GM12878 (cell line): ENCODE measurements at regions of chr19 and their contacts with region 1.

Region 1: GRCh38 chr19:5967994-5968430 is 9.9 kb downstream of the RANBP3 start:
- DNase-seq: peak; percentile 17
- ATAC-seq: peak; percentile 91
- H3K4me3 ChIP-seq: no peak overlapping the region
- H3K27ac ChIP-seq: peak overlapping the region; percentile 53
- H3K4me1 ChIP-seq: peaks cover 12% of the 10 kb centered on the region
- H3K27me3 ChIP-seq: no peaks in the 10 kb centered on the region
- CTCF ChIP-seq: peak; percentile 80 to 92 (median 82)
- EP300 ChIP-seq: 0 out of 4 replicates have a peak, but pooled peaks of 1 of the 2 experiments have one; percentile 21
- POLR2A ChIP-seq: no peak
- RAD21 ChIP-seq: peak; percentile 73

Region 2: GRCh38 chr19:5798244-5798643 is 169.8 kb before region 1 on chr19:
- CTCF ChIA-PET with region 1: no interaction called
- POLR2A ChIA-PET with region 1: no interaction called
- RAD21 ChIA-PET with region 1: no interaction called
- SMC1A ChIA-PET with region 1: no interaction called
- in situ Hi-C with region 1: no loop called
- intact Hi-C with region 1: no loop called
- DNase-seq: no peak
- ATAC-seq: no peak
- H3K4me3 ChIP-seq: no peak overlapping the region
- H3K27ac ChIP-seq: no peak overlapping the region
- H3K4me1 ChIP-seq: peaks cover 1% of the 10 kb centered on the region
- H3K27me3 ChIP-seq: no peaks in the 10 kb centered on the region; a peak in 1 of 4 replicates
- CTCF ChIP-seq: no peak
- EP300 ChIP-seq: no peak
- POLR2A ChIP-seq: no peak
- RAD21 ChIP-seq: no peak

Region 3: GRCh38 chr19:5857203-5858081 is 110.6 kb before region 1 on chr19:
- CTCF ChIA-PET with region 1: no interaction called
- POLR2A ChIA-PET with region 1: no interaction called
- RAD21 ChIA-PET with region 1: no interaction called
- SMC1A ChIA-PET with region 1: no interaction called
- in situ Hi-C with region 1: no loop called
- intact Hi-C with region 1: no loop called
- DNase-seq: no peak
- ATAC-seq: no peak
- H3K4me3 ChIP-seq: no peak overlapping the region
- H3K27ac ChIP-seq: no peak overlapping the region
- H3K4me1 ChIP-seq: no peaks in the 10 kb centered on the region
- H3K27me3 ChIP-seq: no peaks in the 10 kb centered on the region; a peak in 1 of 4 replicates
- CTCF ChIP-seq: no peak
- EP300 ChIP-seq: no peak
- POLR2A ChIP-seq: no peak
- RAD21 ChIP-seq: no peak

Region 4: DNA sequence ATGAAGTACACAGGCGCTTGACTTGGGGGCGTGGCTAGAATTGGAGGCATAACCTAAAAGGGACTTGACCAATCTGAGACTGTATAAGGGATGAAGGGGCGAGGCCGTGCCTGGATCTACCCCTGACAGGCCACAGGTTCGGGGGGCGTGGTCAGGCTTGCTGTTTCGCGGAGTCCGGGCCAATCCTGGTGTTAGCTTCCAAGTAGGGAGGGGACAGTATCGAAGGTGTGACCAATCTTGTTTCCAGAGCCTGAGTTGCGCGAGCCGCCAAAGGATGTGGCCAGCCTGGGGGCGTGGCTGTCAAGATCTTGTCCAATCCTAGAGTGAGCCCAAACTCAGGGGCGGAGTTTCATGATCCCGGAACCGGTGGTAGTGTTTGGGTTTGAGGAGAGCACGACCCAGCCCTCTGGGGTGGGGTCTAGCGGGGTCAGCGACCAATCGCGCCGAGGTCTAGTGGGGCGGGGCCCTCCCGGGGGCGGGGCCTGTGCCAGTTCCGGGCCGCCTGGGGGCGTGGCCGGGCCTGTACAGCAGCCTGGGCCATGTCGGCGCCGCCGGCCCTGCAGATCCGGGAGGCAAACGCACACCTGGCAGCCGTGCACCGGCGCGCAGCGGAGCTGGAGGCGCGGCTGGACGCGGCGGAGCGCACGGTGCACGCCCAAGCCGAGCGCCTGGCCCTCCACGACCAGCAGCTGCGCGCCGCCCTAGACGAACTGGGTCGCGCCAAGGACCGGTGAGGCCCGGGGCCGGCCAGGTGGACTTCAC is 63.5 kb before region 1 on chr19 and contains the start of gene VMAC:
- CTCF ChIA-PET with region 1: interaction called, 15 read pairs
- POLR2A ChIA-PET with region 1: interaction called, 6 read pairs
- RAD21 ChIA-PET with region 1: interaction called, 4 read pairs
- SMC1A ChIA-PET with region 1: interaction called, 3 read pairs
- in situ Hi-C with region 1: no loop called
- intact Hi-C with region 1: no loop called
- DNase-seq: peak; percentile 100
- ATAC-seq: peak; percentile 90
- H3K4me3 ChIP-seq: peak within 1 kb of the TSS; percentile 95
- H3K27ac ChIP-seq: peak within 1 kb of the TSS; percentile 88
- H3K4me1 ChIP-seq: peaks cover 9% of the 10 kb centered on the region
- H3K27me3 ChIP-seq: no peaks in the 10 kb centered on the region
- CTCF ChIP-seq: no peak
- EP300 ChIP-seq: no peak
- POLR2A ChIP-seq: peak; percentile 92
- RAD21 ChIP-seq: no peak
- polyA plus RNA-seq, gene VMAC: 0.18 to 0.27 TPM

Region 5: GRCh38 chr19:5926641-5927440 is 41.2 kb before region 1 on chr19:
- CTCF ChIA-PET with region 1: no interaction called
- POLR2A ChIA-PET with region 1: no interaction called
- RAD21 ChIA-PET with region 1: no interaction called
- SMC1A ChIA-PET with region 1: no interaction called
- in situ Hi-C with region 1: no loop called
- intact Hi-C with region 1: no loop called
- DNase-seq: no peak
- ATAC-seq: no peak
- H3K4me3 ChIP-seq: no peak overlapping the region
- H3K27ac ChIP-seq: no peak overlapping the region
- H3K4me1 ChIP-seq: peaks cover 15% of the 10 kb centered on the region
- H3K27me3 ChIP-seq: no peaks in the 10 kb centered on the region
- CTCF ChIP-seq: no peak
- EP300 ChIP-seq: no peak
- POLR2A ChIP-seq: no peak
- RAD21 ChIP-seq: no peak

Region 6: DNA sequence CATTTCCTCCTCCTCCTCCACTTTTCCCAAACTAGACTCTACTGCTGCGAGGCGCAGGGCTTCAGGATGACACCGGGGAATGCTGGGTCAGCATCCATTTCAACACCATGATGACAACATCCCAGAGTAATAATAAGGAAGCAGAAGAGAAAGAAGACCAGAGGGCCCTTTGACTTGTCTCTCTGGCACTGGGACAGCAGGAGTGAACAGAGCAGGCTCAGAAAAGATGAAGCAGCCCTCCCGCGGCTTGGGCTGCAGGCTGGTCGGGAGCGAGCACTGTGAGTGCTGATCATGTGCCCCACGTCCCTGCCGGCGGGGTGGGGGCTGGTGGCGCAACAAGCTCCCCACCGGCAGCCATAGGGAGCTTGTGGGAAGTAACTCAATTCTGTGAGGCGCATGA is 20.6 kb before region 1 on chr19:
- CTCF ChIA-PET with region 1: interaction called, 16 read pairs
- POLR2A ChIA-PET with region 1: interaction called, 4 read pairs
- RAD21 ChIA-PET with region 1: no interaction called
- SMC1A ChIA-PET with region 1: interaction called, 4 read pairs
- in situ Hi-C with region 1: no loop called
- intact Hi-C with region 1: no loop called
- DNase-seq: no peak
- ATAC-seq: no peak
- H3K4me3 ChIP-seq: no peak overlapping the region
- H3K27ac ChIP-seq: no peak overlapping the region
- H3K4me1 ChIP-seq: peaks cover 10% of the 10 kb centered on the region
- H3K27me3 ChIP-seq: no peaks in the 10 kb centered on the region
- CTCF ChIP-seq: no peak
- EP300 ChIP-seq: no peak
- POLR2A ChIP-seq: no peak
- RAD21 ChIP-seq: no peak

Region 7: GRCh38 chr19:5953680-5954213 is 14.3 kb before region 1 on chr19:
- CTCF ChIA-PET with region 1: interaction called, 22 read pairs
- POLR2A ChIA-PET with region 1: interaction called, 4 read pairs
- RAD21 ChIA-PET with region 1: interaction called, 3 read pairs
- SMC1A ChIA-PET with region 1: interaction called, 3 read pairs
- in situ Hi-C with region 1: no loop called
- intact Hi-C with region 1: no loop called
- DNase-seq: no peak
- ATAC-seq: no peak
- H3K4me3 ChIP-seq: no peak overlapping the region
- H3K27ac ChIP-seq: no peak overlapping the region
- H3K4me1 ChIP-seq: peaks cover 22% of the 10 kb centered on the region
- H3K27me3 ChIP-seq: no peaks in the 10 kb centered on the region
- CTCF ChIP-seq: no peak
- EP300 ChIP-seq: no peak
- POLR2A ChIP-seq: no peak
- RAD21 ChIP-seq: no peak

Region 8: DNA sequence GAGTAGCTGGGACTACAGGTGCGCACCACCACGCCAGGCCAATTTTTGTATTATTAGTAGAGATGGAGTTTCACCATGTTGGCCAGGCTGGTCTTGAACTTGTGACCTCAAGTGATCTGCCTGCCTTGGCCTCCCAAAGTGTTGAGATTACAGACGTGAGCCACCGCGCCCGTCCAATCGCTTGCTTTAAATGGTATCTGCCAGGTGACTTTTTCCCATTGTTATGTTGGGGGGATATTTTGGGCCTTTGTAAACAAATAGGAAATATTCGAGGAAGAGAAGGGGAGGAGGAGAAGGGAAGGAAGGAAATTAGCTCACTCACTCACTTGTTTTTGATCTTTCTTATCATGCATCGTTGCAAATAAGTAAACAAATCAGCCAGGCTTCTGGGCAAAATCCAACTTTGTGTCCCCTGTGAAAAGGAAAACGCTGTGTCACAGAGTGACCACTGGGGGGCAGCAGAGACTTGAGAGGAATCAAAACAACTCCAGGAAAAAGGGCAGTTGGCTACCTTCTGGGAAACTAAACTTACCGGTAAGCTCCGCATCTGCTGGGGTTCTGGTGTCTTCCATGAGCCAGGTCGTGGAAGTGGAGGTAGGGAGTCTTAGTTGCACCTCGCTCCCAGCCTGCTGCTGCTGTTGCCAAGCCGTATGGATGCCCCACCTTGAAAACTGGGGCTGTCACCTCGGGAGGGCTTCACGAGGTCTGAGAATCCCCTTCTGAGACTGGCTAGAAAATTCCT is 19.2 kb after region 1 on chr19:
- CTCF ChIA-PET with region 1: interaction called, 76 read pairs
- POLR2A ChIA-PET with region 1: interaction called, 4 read pairs
- RAD21 ChIA-PET with region 1: interaction called, 17 read pairs
- SMC1A ChIA-PET with region 1: interaction called, 24 read pairs
- in situ Hi-C with region 1: no loop called
- intact Hi-C with region 1: no loop called
- DNase-seq: peak; percentile 19
- ATAC-seq: peak; percentile 75
- H3K4me3 ChIP-seq: peak overlapping the region; percentile 40; the same call in 1 of the 2 replicates
- H3K27ac ChIP-seq: no peak overlapping the region
- H3K4me1 ChIP-seq: peaks cover 8% of the 10 kb centered on the region
- H3K27me3 ChIP-seq: no peaks in the 10 kb centered on the region
- CTCF ChIP-seq: peak; percentile 89 to 95 (median 95)
- EP300 ChIP-seq: no peak
- POLR2A ChIP-seq: no peak
- RAD21 ChIP-seq: peak; percentile 84

Region 9: GRCh38 chr19:6021878-6022569 is 54.0 kb after region 1 on chr19:
- CTCF ChIA-PET with region 1: interaction called, 63 read pairs
- POLR2A ChIA-PET with region 1: no interaction called
- RAD21 ChIA-PET with region 1: interaction called, 21 read pairs
- SMC1A ChIA-PET with region 1: interaction called, 11 read pairs
- in situ Hi-C with region 1: no loop called
- intact Hi-C with region 1: no loop called
- DNase-seq: peak; percentile 17
- ATAC-seq: peak; percentile 99
- H3K4me3 ChIP-seq: no peak overlapping the region
- H3K27ac ChIP-seq: no peak overlapping the region
- H3K4me1 ChIP-seq: no peaks in the 10 kb centered on the region
- H3K27me3 ChIP-seq: 0 out of 4 replicates have a peak, but pooled peaks cover 0 to 2% of the 10 kb centered on the region in 2 experiments
- CTCF ChIP-seq: peak; percentile 69 to 87 (median 71)
- EP300 ChIP-seq: no peak
- POLR2A ChIP-seq: no peak
- RAD21 ChIP-seq: peak; percentile 82

Region 10: GRCh38 chr19:6048808-6049405 is 80.9 kb after region 1 on chr19:
- CTCF ChIA-PET with region 1: interaction called, 13 read pairs
- POLR2A ChIA-PET with region 1: no interaction called
- RAD21 ChIA-PET with region 1: no interaction called
- SMC1A ChIA-PET with region 1: no interaction called
- in situ Hi-C with region 1: no loop called
- intact Hi-C with region 1: no loop called
- DNase-seq: peak; percentile 35
- ATAC-seq: peak; percentile 100
- H3K4me3 ChIP-seq: no peak overlapping the region
- H3K27ac ChIP-seq: no peak overlapping the region
- H3K4me1 ChIP-seq: no peaks in the 10 kb centered on the region; the same call in 1 of the 2 replicates
- H3K27me3 ChIP-seq: no peaks in the 10 kb centered on the region
- CTCF ChIP-seq: peak; percentile 78 to 92 (median 92)
- EP300 ChIP-seq: no peak
- POLR2A ChIP-seq: no peak
- RAD21 ChIP-seq: peak; percentile 97